A673 (cell line): ENCODE measurements at regions of chr9 and their contacts with region 1.

Region 1: GRCh38 chr9:613771-614347 is 227.6 kb upstream of the DMRT1 start:
- DNase-seq: peak; percentile 81
- H3K4me3 ChIP-seq: no peak overlapping the region
- H3K27ac ChIP-seq: no peak overlapping the region
- H3K4me1 ChIP-seq: no peaks in the 10 kb centered on the region
- H3K27me3 ChIP-seq: peaks cover 4% of the 10 kb centered on the region
- CTCF ChIP-seq: peak; percentile 78

Region 2: DNA sequence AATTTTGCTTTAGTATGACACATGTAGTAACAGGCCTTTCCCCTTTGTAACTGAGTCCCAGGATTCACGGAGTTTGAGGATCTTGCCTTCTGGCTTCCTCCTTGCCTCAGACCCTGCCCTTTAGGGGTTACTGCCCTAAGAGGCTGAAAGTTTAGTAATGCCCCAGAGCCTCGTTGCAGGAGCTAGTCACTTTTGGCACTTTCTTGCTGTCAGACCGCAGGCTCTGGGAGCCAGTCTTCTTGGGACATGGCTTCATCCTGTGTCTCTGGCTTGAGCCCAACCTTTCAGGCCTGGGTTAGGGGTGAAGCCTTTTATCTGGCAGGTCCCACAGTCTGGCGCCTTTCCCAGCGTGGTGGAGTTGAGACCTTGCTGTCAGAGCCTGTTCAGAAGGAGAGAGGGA is 42.0 kb after region 1 on chr9:
- CTCF ChIA-PET with region 1: no interaction called
- POLR2A ChIA-PET with region 1: no interaction called
- intact Hi-C with region 1: no loop called
- DNase-seq: no peak
- H3K4me3 ChIP-seq: no peak overlapping the region
- H3K27ac ChIP-seq: no peak overlapping the region
- H3K4me1 ChIP-seq: no peaks in the 10 kb centered on the region
- H3K27me3 ChIP-seq: no peaks in the 10 kb centered on the region
- CTCF ChIP-seq: no peak

Region 3: DNA sequence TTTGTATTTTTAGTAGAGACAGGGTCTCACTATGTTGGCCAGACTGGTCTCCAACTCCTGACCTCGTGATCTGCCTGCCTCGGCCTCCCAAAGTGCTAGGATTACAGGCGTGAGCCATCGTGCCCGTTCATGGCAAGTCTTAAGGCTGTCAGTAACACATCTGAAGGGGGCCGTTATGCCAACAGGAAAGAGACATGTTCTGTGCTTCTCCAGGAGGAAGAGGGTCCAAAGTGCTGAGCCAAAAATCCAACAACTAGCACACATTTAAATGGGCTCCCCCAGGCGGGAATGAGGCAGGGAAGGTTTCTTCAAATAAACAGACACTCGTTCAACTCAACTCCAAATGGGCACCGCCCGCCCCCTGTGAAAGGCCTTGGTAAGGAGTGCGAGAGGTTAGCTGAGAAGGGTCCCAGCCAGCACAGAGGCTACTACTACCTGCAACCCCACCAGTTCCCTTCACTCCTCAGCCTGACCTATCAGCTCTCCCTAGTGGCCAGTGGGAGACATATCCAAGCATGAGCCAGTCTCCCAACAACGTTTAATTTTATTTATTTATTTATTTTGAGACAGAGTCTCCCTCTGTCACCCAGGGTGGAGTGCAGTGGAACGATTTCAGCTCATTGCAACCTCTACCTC is 143.5 kb after region 1 on chr9:
- CTCF ChIA-PET with region 1: no interaction called
- POLR2A ChIA-PET with region 1: no interaction called
- intact Hi-C with region 1: loop called (anchors 2 kb)
- DNase-seq: peak; percentile 60
- H3K4me3 ChIP-seq: no peak overlapping the region
- H3K27ac ChIP-seq: no peak overlapping the region
- H3K4me1 ChIP-seq: no peaks in the 10 kb centered on the region
- H3K27me3 ChIP-seq: peaks cover 4% of the 10 kb centered on the region
- CTCF ChIP-seq: peak; percentile 50

Region 4: GRCh38 chr9:806285-807156 is 192.7 kb after region 1 on chr9:
- CTCF ChIA-PET with region 1: no interaction called
- POLR2A ChIA-PET with region 1: no interaction called
- intact Hi-C with region 1: loop called (anchors 2 kb)
- DNase-seq: peak; percentile 45
- H3K4me3 ChIP-seq: no peak overlapping the region
- H3K27ac ChIP-seq: no peak overlapping the region
- H3K4me1 ChIP-seq: peaks cover 3% of the 10 kb centered on the region
- H3K27me3 ChIP-seq: peaks cover 21% of the 10 kb centered on the region
- CTCF ChIP-seq: peak; percentile 72

Region 5: DNA sequence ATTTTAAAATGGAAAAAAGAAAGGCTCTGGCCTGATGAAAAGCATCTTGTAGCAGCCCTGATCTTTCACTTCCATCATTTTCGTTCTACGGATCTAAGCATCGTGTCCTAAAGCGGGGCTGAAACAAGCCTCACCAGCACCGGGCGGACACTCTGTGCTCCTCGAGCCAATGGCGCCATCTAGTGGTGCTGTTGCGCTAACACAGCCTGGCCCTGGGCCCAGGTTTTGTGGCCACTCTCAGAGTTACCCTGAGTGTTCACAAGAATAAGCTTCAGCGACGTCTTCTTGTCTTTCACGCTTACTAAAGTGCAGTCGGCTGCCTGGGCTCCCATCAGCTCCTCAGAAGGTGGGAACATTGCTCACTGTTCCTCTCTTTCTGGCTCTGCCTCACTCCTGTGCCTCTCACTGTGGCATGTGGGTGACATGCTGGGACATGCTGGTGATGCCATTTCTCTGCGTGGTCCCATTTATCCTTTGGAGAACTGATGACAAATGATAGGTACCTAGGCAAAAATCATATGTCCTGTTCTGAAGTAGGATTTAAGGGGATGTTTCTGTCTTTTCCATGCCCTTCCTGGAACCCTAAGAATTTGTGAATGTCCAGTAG is 395.3 kb after region 1 on chr9:
- CTCF ChIA-PET with region 1: no interaction called
- POLR2A ChIA-PET with region 1: no interaction called
- intact Hi-C with region 1: loop called (anchors 2 kb)
- DNase-seq: peak; percentile 82
- H3K4me3 ChIP-seq: no peak overlapping the region
- H3K27ac ChIP-seq: no peak overlapping the region
- H3K4me1 ChIP-seq: no peaks in the 10 kb centered on the region
- H3K27me3 ChIP-seq: peaks cover 7% of the 10 kb centered on the region
- CTCF ChIP-seq: peak; percentile 92

Region 6: DNA sequence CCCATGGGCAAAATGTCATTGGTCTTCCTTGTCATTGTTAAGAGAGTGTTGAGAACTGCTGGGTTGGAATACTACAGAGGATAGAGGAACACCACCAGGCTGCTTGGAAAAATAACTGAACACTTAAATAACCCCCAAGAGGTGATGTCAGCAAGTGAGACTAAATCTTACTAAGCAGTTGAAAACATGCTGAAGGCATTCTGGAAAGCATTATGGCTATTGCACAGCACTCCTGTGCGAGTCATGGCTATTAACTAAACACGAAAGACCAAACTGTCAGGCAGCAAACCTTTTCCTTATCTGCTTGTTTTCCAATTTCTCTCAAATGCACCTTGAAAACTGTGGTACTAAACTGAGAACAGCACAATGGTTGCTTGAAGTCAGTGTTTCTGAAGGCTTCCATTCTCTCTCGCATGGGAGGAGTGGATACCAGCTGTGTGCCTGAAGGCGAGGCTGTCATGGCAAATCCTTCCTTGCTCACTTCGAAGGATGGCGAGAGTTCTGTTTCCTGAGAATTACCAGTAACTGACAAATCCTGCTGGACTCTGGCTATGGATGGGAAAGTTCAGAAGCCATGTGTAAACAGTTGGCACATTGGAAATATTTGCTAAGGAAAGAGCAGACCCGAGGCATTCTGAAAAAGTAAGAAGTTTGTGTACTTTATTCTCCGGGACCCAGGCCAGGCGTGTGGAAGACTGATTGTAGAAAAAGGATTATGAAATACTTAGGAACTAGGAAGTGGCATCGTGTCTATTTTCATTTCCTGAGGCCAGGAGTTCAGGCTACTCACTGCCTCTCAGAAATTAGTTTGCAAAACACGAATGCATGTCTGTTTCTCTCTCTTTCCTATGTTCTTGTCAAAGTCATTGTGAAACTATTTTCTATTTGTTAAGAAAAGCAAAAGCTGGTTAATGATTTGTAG is 618.4 kb after region 1 on chr9:
- CTCF ChIA-PET with region 1: no interaction called
- POLR2A ChIA-PET with region 1: no interaction called
- intact Hi-C with region 1: no loop called
- DNase-seq: no peak
- H3K4me3 ChIP-seq: no peak overlapping the region
- H3K27ac ChIP-seq: no peak overlapping the region
- H3K4me1 ChIP-seq: no peaks in the 10 kb centered on the region
- H3K27me3 ChIP-seq: no peaks in the 10 kb centered on the region
- CTCF ChIP-seq: no peak